ENCODE measurements at regions of chr21 and their contacts with region 1.

Region 1: GRCh38 chr21:41612674-41613532 is 104.9 kb upstream of the TMPRSS2 start:
- H3K4me3 ChIP-seq: no peak overlapping the region
- H3K27ac ChIP-seq: no peak overlapping the region
- H3K4me1 ChIP-seq: no peaks in the 10 kb centered on the region
- CTCF ChIP-seq: peak; percentile 72

Region 2: DNA sequence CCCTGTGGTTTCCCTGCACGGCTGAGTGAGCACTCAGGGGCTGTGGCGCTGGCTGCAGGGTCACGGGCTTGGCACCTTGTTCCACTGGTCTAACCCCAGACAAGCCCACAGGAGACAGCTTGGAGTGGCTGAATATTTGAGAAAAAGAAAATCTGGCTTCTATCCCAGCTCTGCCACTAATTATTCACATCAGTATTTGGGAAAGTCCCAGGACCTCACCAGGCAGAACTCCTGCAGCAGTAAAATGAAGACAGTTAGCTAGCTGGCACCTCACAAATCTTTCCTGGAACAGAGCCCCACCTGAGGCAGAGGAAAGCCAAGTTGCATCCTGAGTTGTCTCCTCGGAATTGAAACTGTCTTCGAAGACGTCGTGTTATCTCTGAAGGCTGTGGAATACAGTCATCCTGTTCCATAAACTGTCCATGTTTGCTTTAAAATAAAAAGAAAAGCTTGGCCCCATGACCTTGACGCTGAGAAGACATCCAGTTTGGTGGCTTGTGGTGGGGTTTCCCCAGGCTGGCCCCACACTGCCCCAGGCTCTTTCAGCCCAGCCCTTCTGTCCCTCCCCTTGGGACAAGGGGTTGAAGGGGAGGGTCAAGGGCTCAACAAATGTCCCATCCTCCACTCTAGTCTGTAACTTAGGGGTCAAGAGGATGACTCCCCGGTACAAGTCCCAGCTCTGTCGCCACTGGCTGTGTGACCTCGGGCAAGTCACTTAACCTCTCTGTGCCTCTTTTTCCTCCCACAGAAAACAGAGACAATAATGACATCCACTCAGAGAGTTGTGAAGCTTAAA is 11.1 kb before region 1 on chr21:
- CTCF ChIA-PET with region 1: interaction called, 12 read pairs
- POLR2A ChIA-PET with region 1: no interaction called
- H3K4me3 ChIP-seq: no peak overlapping the region
- H3K27ac ChIP-seq: no peak overlapping the region
- H3K4me1 ChIP-seq: no peaks in the 10 kb centered on the region
- CTCF ChIP-seq: no peak

Region 3: GRCh38 chr21:41673581-41674335 is 60.9 kb after region 1 on chr21:
- CTCF ChIA-PET with region 1: interaction called, 25 read pairs
- POLR2A ChIA-PET with region 1: no interaction called
- H3K4me3 ChIP-seq: no peak overlapping the region
- H3K27ac ChIP-seq: no peak overlapping the region
- H3K4me1 ChIP-seq: peaks cover 7% of the 10 kb centered on the region
- CTCF ChIP-seq: no peak

Region 4: GRCh38 chr21:41752231-41752681 is 139.4 kb after region 1 on chr21:
- CTCF ChIA-PET with region 1: interaction called, 15 read pairs
- POLR2A ChIA-PET with region 1: no interaction called
- H3K4me3 ChIP-seq: no peak overlapping the region
- H3K27ac ChIP-seq: no peak overlapping the region
- H3K4me1 ChIP-seq: no peaks in the 10 kb centered on the region
- CTCF ChIP-seq: no peak

Region 5: DNA sequence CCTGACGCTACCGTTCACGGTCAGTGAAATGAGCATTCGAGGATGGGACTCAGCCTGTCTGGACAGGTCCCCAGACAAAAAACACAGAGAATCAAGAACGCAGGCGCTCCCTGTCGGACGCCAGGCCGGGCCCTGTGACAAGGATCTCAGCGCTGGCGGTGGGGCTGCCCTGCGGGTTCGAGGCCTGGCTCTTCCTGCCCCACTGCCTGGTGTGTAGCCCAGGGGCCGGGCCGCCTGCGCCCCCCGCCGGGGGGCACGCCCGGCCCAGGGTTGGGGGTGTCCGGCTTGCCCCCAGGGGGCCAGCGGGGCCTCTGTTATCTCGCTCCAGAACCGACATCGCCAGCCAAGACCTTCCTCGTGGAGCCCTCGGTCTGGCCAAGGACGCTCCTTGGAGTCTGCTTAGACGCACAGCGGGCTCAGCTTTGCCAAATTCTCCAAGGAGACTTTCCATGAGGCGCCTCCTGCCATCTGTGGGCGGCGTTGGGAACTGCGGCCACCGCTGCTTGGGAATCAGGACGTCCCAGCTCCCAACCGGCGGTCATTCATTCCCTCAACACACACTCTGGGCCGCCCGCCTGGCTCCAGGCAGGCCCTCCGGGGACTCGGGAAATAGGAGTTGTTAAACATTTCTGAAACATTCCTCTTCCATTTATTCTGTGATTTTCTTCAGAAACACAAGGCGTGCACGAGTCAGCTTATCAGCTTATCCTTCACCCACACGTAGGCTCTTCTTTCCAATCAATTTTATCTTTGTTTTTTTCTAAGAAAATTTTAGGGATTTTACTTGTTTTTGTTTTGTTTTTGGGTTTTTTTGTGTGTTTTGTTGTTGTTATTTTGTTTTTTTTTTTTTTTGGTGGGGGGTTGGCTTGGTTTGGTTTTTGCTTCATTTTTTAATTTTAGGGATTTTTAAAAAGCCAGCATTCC is 165.3 kb after region 1 on chr21:
- CTCF ChIA-PET with region 1: interaction called, 164 read pairs
- POLR2A ChIA-PET with region 1: interaction called, 8 read pairs
- H3K4me3 ChIP-seq: no peak overlapping the region
- H3K27ac ChIP-seq: no peak overlapping the region; the same call in 1 of the 2 replicates
- H3K4me1 ChIP-seq: peaks cover 15% of the 10 kb centered on the region; the same call in 1 of the 2 replicates
- CTCF ChIP-seq: peak; percentile 71

Region 6: GRCh38 chr21:41823166-41823565 is 210.3 kb after region 1 on chr21:
- CTCF ChIA-PET with region 1: interaction called, 203 read pairs
- POLR2A ChIA-PET with region 1: no interaction called
- H3K4me3 ChIP-seq: no peak overlapping the region
- H3K27ac ChIP-seq: no peak overlapping the region
- H3K4me1 ChIP-seq: no peaks in the 10 kb centered on the region
- CTCF ChIP-seq: no peak

Region 7: DNA sequence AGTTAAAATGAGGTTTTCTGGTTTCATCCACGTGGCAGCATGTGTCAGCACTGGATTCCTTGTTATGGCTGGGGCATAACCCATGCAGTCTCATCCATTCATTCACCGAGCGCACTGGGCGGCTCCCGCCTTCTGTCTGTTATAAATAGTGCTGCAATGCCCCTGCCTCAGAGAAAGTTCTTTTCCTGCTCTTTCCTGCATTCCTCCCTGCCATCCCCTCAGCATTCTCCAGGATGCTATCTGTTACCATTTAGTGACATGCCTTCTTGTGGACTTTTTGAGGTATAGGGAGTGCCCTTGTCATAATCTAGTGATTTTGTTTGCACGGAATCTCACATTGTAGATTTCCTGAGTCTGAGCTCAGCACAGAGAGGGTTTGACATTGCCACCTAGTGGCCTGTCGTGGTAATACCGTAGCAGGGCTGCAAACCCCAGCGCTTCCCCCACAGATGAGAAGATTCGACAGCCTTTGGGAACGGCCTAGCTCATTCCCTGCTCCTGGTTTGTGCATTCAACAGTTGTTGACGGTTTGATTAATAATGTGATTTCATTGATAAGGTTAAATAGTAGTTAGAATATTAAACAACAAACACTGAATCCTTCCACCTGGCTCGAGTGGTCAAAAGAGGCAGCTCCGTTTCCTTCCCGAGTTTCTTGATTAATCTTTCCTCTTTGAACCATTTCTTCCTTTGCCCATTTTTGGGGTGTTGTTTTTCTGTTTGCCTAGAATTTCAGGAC is 504.5 kb after region 1 on chr21:
- CTCF ChIA-PET with region 1: interaction called, 36 read pairs
- POLR2A ChIA-PET with region 1: no interaction called
- H3K4me3 ChIP-seq: no peak overlapping the region
- H3K27ac ChIP-seq: no peak overlapping the region
- H3K4me1 ChIP-seq: no peaks in the 10 kb centered on the region
- CTCF ChIP-seq: peak; percentile 82; the same call in 1 of the 2 replicates

Measured in HEK293 (cell line).